HEK293 (cell line): ENCODE measurements at regions of chr3 and their contacts with region 1.

Region 1: DNA sequence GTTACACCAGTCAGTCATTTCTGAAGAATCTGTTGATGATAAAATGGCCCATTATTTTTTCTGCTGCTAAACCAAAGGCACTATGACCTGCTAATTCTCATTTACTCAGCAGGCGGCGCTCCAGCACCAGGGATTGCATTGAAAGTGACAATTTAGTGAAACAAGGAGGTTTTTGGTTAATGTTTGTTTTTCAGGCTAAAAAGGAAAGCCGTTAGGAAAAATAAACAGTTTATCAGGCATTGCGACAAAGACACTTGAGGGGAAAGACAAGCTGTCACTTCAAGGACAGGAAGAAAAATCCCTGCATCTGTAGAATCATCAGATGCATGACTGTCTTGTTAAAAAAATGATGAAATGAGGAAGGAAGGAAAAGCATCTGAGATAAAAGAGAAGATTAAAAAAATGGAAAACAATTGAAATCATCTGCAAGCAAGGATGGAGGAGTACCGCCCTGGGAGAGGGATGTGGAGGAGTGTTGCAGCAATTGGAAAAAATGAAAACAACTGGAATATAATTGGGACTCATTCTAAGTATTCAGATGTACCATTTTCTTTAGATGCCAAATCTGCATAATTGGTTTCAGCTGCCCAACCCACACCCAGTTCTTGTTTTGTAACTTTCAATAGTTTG is 54.0 kb downstream of the NR1D2 start:
- H3K4me3 ChIP-seq: no peak overlapping the region
- H3K27ac ChIP-seq: no peak overlapping the region
- H3K4me1 ChIP-seq: no peaks in the 10 kb centered on the region
- CTCF ChIP-seq: peak; percentile 65

Region 2: DNA sequence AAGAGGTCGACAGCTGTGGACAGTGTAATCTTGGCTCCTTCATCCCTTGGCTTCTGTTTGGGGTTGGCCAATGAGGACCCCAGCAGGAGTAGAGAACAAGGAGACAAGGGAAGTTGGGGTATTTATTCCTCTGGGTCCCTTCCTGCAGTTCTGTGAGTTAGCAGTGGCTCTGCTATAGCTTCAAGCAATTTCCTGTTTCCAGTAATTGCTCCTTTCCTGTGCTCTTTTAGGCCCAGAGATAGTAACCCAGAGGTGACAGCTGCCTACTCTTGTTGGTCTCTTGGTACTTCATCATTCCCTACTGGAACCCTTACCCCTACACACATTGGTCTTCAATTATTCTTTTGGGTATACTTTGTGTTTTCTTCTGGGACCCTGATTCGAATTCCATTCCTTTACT is 38.8 kb after region 1 on chr3:
- CTCF ChIA-PET with region 1: no interaction called
- POLR2A ChIA-PET with region 1: no interaction called
- H3K4me3 ChIP-seq: no peak overlapping the region
- H3K27ac ChIP-seq: no peak overlapping the region
- H3K4me1 ChIP-seq: no peaks in the 10 kb centered on the region
- CTCF ChIP-seq: no peak

Region 3: DNA sequence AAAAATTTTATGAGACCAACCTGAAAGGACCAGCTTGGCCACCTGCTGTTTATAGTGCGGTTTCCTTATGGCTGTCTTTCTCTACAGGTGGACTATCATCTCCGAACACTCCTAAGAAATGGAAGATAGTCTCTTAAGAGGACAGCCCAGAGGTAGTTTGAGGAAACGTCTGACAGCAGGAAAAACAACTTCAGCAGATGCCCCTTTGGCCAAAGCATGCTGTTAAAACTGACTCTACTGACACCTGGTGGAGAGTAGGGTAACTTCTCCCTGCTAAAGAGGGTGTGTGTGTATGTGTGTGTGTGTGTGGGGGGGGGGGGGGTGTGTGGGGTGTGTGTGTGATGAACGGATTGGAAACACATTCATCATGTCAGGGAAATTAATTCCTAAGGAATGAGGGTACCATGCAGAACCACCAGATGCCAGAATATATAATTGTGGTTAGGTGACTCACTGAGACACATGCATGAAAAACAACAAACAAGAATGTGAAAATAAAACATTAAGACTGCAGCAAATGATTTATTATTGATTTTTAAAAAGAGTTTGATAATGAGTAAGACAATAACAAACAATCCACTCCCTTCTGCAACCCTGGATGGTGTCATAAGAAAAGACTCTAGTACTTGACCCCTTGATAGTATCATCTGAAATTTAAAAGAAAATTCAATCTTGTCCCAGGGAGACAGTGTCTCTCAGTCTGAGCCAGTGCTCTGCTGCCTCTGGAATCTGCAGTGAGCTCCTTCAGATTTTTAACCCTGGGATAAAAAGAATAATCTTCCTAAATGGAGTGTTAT is 239.0 kb after region 1 on chr3:
- CTCF ChIA-PET with region 1: interaction called, 11 read pairs
- POLR2A ChIA-PET with region 1: no interaction called
- H3K4me3 ChIP-seq: no peak overlapping the region
- H3K27ac ChIP-seq: no peak overlapping the region
- H3K4me1 ChIP-seq: peaks cover 5% of the 10 kb centered on the region; the same call in 1 of the 2 replicates
- CTCF ChIP-seq: peak; percentile 81